ENCODE measurements at regions of chr14 and their contacts with region 1.

Region 1: DNA sequence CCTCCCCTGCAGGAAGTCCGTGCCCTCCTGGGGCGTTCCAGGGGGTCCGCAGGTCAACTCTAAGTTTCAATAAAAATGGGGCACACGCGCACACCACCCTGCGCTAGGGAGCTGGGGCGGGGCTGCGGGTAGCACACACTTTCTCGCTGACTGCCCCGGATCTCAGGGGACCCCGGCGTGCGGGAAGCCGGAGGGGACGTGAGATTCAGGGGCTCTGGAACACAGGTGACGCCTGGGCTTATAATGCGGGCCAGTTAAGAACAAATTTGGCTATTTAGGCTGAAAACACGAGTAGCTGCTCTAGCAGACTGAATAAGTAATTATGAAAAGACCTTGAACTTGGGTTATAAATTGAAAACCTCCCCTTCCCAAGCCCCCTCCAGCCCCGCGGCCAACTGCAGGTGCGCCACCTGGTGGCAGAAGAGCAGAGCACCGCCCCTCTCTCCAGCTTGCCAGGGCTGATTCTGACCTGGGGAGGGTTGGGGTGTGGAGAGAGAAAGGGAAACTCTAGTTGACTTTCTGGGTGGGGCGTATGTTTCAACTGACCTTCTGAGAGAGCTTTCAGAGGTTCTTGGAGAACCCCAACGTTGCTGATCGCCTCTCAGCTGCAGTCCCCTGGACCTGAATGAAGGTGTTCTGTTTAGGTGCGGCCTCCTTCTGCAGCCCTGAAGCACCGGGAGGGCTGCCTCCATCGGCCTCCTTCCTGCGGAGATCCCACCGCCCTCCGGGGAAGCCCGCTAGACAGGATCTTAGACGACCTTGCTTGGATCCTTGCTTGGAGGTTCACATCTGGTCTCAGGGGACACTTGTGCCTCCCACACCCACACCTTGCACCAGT is 118.4 kb upstream of the EVL start:
- DNase-seq: peak in 1 of 2 experiments; percentile 76
- ATAC-seq: peak; percentile 75 to 89
- H3K4me3 ChIP-seq: no peak overlapping the region
- H3K27ac ChIP-seq: no peak overlapping the region
- H3K4me1 ChIP-seq: peaks cover 8% of the 10 kb centered on the region; the same call in 1 of the 3 replicates
- CTCF ChIP-seq: peak; percentile 81
- EP300 ChIP-seq: no peak
- POLR2A ChIP-seq: no peak
- RAD21 ChIP-seq: peak; percentile 47 to 54; a peak in 4 of 5 replicates

Region 2: DNA sequence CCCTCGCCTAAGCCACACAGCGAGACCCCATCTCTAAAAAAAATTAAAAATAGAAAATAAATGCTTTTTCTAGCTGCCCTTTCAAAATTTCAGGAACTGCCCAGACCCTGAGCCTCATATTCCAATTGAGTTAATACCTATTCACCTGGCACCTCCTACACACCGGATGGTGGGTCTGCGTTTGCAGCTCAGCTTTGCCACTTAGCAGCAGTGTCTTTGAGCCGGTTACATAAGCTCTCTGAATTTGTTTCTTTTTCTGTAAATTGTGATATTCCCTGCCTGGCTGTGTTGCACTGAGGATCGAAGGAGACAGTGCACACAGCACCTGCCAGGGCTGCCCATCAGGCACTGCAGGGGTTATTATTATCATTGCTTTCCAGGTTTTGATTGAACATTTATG is 28.1 kb before region 1 on chr14:
- CTCF ChIA-PET with region 1: interaction called, 27 read pairs
- POLR2A ChIA-PET with region 1: no interaction called
- DNase-seq: no peak
- ATAC-seq: no peak
- H3K4me3 ChIP-seq: no peak overlapping the region
- H3K27ac ChIP-seq: no peak overlapping the region
- H3K4me1 ChIP-seq: no peaks in the 10 kb centered on the region
- CTCF ChIP-seq: no peak
- EP300 ChIP-seq: no peak
- POLR2A ChIP-seq: no peak
- RAD21 ChIP-seq: no peak

Region 3: DNA sequence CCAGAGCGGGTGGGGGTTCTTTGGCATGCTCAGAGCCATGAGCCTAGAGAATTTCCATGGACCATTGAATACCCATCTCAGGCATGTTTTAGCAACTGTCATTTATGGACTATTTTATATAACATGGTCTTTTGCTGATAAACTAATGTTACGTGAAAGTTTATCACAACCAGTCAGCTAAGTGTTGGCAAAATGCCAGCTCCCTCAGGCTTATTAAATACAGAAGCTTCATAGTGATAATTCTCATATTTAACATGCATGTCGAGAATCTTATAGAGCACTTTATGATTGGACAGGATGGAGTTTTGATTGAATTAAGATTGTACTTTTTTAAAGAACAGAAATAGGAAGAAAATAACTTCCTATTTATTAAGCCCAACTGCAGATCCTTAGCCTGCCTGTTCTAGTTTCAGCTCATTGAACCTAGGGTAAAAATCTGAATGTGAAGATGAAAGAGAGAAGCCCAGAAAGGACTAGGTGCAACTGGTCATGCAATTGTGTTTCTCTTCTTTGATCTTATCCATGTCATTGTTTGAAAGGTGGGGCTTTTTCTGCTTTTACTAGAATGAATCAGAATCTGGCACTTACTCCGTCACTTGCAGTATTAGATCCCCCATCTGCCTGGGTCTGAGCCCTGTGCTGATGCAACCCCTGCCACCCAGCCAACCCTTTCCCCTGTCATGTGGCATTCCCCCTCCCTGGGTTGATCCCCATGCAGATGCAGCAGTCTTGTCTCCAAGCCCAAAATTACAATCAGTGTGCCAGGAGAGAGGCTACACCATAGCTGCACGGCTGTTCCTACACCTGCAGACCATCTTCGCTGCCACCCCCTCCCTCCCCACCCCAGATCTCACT is 16.2 kb before region 1 on chr14:
- CTCF ChIA-PET with region 1: interaction called, 44 read pairs
- POLR2A ChIA-PET with region 1: no interaction called
- DNase-seq: no peak
- ATAC-seq: no peak
- H3K4me3 ChIP-seq: no peak overlapping the region
- H3K27ac ChIP-seq: no peak overlapping the region
- H3K4me1 ChIP-seq: no peaks in the 10 kb centered on the region
- CTCF ChIP-seq: no peak
- EP300 ChIP-seq: no peak
- POLR2A ChIP-seq: no peak
- RAD21 ChIP-seq: no peak

Region 4: DNA sequence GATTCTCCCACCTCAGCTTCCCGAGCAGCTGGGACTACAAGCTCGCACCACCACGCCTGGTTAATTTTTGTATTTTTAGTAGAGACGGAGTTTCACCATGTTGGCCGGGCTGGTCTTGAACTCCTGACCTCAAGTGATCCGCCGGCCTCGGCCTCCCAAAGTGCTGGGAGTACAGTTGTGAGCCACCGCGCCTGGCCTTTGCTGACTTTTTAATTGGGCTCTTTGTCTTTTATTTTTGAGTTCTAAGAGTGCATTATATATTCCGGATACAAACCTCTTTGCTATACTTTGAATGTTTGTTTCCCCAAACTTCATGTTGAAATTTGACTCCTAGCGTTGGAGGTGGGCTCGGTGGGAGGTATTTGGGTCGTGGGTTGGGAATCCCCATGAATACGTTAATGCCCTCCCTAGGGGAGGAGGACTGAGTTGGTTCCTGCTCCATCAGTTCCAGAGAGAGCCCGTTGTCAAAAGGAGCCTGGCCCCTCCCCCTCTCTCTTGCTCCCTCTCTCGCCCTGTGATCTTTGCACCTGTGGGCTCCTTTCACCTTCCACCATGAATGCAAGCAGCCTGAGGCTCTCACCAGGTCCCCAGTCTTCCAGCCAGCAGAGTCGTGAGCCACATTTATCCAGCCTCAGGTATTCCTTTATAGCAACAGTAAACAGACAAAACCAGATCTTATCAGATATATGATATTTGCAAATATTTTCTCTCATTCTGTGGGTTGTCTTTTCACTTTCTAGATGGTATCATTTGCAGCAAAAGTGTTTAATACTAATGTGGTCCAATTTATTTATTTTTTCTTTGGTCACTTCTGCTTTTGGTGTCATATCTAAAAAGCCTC is 15.2 kb after region 1 on chr14:
- CTCF ChIA-PET with region 1: interaction called, 28 read pairs
- POLR2A ChIA-PET with region 1: no interaction called
- DNase-seq: no peak
- ATAC-seq: no peak
- H3K4me3 ChIP-seq: no peak overlapping the region
- H3K27ac ChIP-seq: no peak overlapping the region
- H3K4me1 ChIP-seq: no peaks in the 10 kb centered on the region
- CTCF ChIP-seq: no peak
- EP300 ChIP-seq: no peak
- POLR2A ChIP-seq: no peak
- RAD21 ChIP-seq: no peak